ENCODE measurements at regions of chr3 and their contacts with region 1.

Region 1: DNA sequence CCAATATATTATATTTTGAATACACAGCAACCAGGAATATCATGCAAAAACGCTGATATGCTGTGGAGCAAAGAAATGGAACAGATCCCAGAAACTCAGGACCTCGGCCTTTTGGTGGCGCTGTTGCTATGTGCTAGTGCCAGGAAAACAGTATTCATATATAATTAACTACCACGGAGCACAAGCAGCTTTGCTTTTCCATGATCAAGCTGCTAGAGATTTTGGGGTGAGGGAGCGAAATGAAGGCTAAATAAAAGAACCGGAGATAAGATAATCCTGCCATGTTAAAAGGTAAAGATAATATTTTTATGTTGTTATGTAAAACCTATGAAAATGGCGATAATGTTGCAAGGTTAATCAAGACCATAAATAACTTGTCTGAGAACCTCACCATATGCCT is 157.7 kb upstream of the FAM3D start:
- DNase-seq: peak; percentile 64
- H3K4me3 ChIP-seq: no peak overlapping the region; a peak in 1 of 4 replicates
- H3K27ac ChIP-seq: no peak overlapping the region
- H3K4me1 ChIP-seq: no peaks in the 10 kb centered on the region; a peak in 1 of 4 replicates
- H3K27me3 ChIP-seq: no peaks in the 10 kb centered on the region
- CTCF ChIP-seq: peak; percentile 95
- EP300 ChIP-seq: 0 out of 4 replicates have a peak, but pooled peaks of 1 of the 2 experiments have one; percentile 12
- RAD21 ChIP-seq: peak; percentile 89

Region 2: DNA sequence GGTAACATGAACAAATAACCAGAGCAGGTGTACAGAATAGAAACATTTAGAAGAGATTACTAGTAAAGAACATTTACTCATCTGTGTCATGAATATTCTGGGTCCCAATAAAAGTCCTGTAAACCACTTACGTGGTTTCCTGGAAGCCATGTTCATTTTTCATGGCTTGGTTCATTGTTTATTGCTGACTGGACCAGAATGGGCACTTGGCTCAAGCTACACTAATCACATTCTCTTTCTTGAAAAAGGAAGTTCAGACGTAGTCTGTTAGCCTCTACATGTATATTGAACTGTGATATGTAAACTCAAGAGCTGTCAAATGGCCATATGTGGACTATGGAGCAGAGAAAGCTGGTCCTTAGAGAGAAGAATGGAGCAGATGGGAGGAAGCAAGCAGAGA is 19.4 kb before region 1 on chr3:
- CTCF ChIA-PET with region 1: interaction called, 10 read pairs
- POLR2A ChIA-PET with region 1: no interaction called
- DNase-seq: no peak
- H3K4me3 ChIP-seq: no peak overlapping the region
- H3K27ac ChIP-seq: no peak overlapping the region
- H3K4me1 ChIP-seq: peaks cover 0 to 19% of the 10 kb centered on the region in 2 experiments; a peak in 2 of 4 replicates
- H3K27me3 ChIP-seq: no peaks in the 10 kb centered on the region
- CTCF ChIP-seq: no peak
- EP300 ChIP-seq: no peak
- RAD21 ChIP-seq: no peak

Region 3: DNA sequence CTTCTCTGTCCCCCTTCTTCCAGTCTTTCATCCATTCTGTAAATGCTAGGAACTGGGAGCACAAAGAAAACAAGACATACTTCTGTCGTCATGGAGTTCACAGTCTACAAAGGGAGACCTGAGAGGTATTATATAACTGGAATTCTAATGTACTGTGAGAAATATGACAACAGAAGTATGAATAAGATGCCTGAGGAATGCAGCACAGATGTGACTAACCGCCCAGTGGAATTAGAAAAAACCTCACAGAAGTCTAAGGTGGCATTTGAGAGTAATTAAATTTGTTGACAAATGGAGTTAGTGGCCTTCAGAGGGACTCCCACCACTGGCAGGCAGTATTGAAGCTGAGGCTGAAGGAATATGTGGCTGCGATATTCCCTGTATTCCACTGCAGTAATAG is 10.8 kb after region 1 on chr3:
- CTCF ChIA-PET with region 1: interaction called, 21 read pairs
- POLR2A ChIA-PET with region 1: no interaction called
- DNase-seq: no peak
- H3K4me3 ChIP-seq: no peak overlapping the region
- H3K27ac ChIP-seq: peak overlapping the region in 1 of 2 experiments; percentile 23; a peak in 2 of 4 replicates
- H3K4me1 ChIP-seq: peaks cover 0 to 8% of the 10 kb centered on the region in 2 experiments; a peak in 2 of 4 replicates
- H3K27me3 ChIP-seq: no peaks in the 10 kb centered on the region
- CTCF ChIP-seq: no peak
- EP300 ChIP-seq: no peak
- RAD21 ChIP-seq: no peak

Region 4: GRCh38 chr3:58848826-58849225 is 24.5 kb after region 1 on chr3:
- CTCF ChIA-PET with region 1: no interaction called
- POLR2A ChIA-PET with region 1: no interaction called
- DNase-seq: no peak
- H3K4me3 ChIP-seq: no peak overlapping the region
- H3K27ac ChIP-seq: no peak overlapping the region
- H3K4me1 ChIP-seq: no peaks in the 10 kb centered on the region
- H3K27me3 ChIP-seq: no peaks in the 10 kb centered on the region
- CTCF ChIP-seq: no peak
- EP300 ChIP-seq: no peak
- RAD21 ChIP-seq: no peak